Mammary epithelial cell (primary cell): ENCODE measurements at regions of chr13 and their contacts with region 1.

Region 1: GRCh38 chr13:20182231-20182846 is 10.4 kb downstream of the GJB2 start:
- DNase-seq: peak; percentile 54
- H3K4me3 ChIP-seq: no peak overlapping the region
- H3K27ac ChIP-seq: no peak overlapping the region
- H3K4me1 ChIP-seq: peaks cover 9% of the 10 kb centered on the region
- H3K27me3 ChIP-seq: no peaks in the 10 kb centered on the region
- CTCF ChIP-seq: peak; percentile 90

Region 2: GRCh38 chr13:19618925-19619324 is 563.4 kb before region 1 on chr13:
- CTCF ChIA-PET with region 1: no interaction called
- dilution Hi-C with region 1: no loop called
- in situ Hi-C with region 1: no loop called
- intact Hi-C with region 1: no loop called
- DNase-seq: no peak
- H3K4me3 ChIP-seq: no peak overlapping the region
- H3K27ac ChIP-seq: no peak overlapping the region
- H3K4me1 ChIP-seq: no peaks in the 10 kb centered on the region
- H3K27me3 ChIP-seq: no peaks in the 10 kb centered on the region
- CTCF ChIP-seq: peak; percentile 74 to 81

Region 3: GRCh38 chr13:20136781-20137703 is 45.3 kb before region 1 on chr13:
- CTCF ChIA-PET with region 1: no interaction called
- dilution Hi-C with region 1: no loop called
- in situ Hi-C with region 1: no loop called
- intact Hi-C with region 1: no loop called
- DNase-seq: peak; percentile 14
- H3K4me3 ChIP-seq: peak overlapping the region in 1 of 3 experiments; percentile 9
- H3K27ac ChIP-seq: no peak overlapping the region
- H3K4me1 ChIP-seq: no peaks in the 10 kb centered on the region
- H3K27me3 ChIP-seq: no peaks in the 10 kb centered on the region
- CTCF ChIP-seq: peak; percentile 16 to 52

Region 4: DNA sequence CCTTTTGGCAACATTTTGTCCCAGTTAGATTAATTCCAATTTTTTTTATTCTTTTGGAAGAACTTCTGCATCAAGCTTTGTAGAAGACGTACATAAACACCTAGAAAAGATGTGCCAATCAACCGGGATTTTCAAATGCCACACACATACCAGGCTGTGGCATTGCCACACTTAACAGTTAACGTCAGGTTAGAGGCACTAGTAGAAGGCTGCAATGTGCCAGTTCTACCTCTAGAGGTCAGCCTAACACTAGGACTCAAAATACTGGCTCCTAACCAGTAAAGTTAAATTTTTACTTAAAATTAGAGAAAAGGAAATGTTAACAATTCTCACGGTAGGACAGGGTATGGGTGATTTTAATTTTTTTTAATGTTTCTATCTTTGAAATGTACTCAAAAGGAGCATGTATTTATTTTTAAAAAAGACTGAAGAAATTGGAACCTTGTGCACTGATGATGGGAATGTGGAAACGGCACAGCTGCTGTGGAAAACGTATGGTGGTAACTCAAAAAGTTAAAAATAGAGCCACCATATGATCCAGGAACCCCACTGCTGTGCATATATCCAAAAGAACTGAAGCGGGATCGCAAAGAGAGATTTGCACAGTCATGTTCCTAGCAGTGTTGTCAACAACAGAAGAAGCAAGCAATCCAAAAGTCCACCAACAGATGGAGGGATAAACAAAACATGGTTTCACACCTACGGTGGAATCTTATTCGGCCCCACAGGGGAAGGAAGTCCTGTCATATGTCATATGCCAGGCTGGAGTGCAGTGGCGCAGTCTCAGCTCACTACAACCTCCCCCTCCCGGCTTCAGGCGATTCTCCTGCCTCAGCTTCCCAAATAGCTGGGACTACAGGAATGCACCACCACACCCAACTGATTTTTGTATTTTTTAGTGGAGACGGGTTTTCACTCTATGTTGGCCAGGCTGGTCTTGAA is 313.0 kb after region 1 on chr13:
- CTCF ChIA-PET with region 1: no interaction called
- dilution Hi-C with region 1: no loop called
- in situ Hi-C with region 1: no loop called
- intact Hi-C with region 1: loop called (anchors 1 kb)
- DNase-seq: peak; percentile 56
- H3K4me3 ChIP-seq: no peak overlapping the region
- H3K27ac ChIP-seq: no peak overlapping the region
- H3K4me1 ChIP-seq: peaks cover 10% of the 10 kb centered on the region
- H3K27me3 ChIP-seq: no peaks in the 10 kb centered on the region
- CTCF ChIP-seq: peak; percentile 91 to 98

Region 5: DNA sequence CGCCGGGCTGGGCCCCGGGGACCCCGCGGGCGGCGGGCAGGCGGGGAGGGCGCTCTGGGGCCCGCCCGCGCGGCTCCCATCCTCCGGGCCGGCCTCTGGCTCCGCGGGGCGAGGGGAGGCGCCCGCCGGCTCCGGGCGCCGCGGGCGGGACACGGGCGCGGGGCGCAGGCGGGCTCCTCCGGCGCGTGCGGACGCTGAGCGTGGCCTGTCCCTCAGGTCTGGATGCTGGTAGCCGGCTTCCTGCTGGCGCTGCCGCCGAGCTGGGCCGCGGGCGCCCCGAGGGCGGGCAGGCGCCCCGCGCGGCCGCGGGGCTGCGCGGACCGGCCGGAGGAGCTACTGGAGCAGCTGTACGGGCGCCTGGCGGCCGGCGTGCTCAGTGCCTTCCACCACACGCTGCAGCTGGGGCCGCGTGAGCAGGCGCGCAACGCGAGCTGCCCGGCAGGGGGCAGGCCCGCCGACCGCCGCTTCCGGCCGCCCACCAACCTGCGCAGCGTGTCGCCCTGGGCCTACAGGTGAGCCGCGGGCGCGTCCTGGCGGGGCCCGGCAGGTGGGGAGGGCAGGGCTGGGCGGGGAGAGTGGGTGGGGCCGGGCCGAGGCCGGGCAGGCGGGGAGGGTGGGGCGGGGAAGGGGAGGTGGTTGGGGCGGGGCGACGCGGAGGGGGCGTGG is 521.6 kb after region 1 on chr13:
- CTCF ChIA-PET with region 1: interaction called, 5 read pairs
- dilution Hi-C with region 1: loop called (anchors 5 kb)
- in situ Hi-C with region 1: no loop called
- intact Hi-C with region 1: loop called (anchors 2 kb)
- DNase-seq: peak; percentile 82
- H3K4me3 ChIP-seq: peak overlapping the region in 2 of 3 experiments; percentile 60 to 74
- H3K27ac ChIP-seq: no peak overlapping the region
- H3K4me1 ChIP-seq: peaks cover 6% of the 10 kb centered on the region
- H3K27me3 ChIP-seq: no peaks in the 10 kb centered on the region
- CTCF ChIP-seq: peak; percentile 36 to 44

Region 6: GRCh38 chr13:20714563-20715329 is 532.4 kb after region 1 on chr13:
- CTCF ChIA-PET with region 1: no interaction called
- dilution Hi-C with region 1: no loop called
- in situ Hi-C with region 1: no loop called
- intact Hi-C with region 1: no loop called
- DNase-seq: no peak
- H3K4me3 ChIP-seq: no peak overlapping the region
- H3K27ac ChIP-seq: no peak overlapping the region
- H3K4me1 ChIP-seq: no peaks in the 10 kb centered on the region
- H3K27me3 ChIP-seq: no peaks in the 10 kb centered on the region
- CTCF ChIP-seq: no peak

Region 7: DNA sequence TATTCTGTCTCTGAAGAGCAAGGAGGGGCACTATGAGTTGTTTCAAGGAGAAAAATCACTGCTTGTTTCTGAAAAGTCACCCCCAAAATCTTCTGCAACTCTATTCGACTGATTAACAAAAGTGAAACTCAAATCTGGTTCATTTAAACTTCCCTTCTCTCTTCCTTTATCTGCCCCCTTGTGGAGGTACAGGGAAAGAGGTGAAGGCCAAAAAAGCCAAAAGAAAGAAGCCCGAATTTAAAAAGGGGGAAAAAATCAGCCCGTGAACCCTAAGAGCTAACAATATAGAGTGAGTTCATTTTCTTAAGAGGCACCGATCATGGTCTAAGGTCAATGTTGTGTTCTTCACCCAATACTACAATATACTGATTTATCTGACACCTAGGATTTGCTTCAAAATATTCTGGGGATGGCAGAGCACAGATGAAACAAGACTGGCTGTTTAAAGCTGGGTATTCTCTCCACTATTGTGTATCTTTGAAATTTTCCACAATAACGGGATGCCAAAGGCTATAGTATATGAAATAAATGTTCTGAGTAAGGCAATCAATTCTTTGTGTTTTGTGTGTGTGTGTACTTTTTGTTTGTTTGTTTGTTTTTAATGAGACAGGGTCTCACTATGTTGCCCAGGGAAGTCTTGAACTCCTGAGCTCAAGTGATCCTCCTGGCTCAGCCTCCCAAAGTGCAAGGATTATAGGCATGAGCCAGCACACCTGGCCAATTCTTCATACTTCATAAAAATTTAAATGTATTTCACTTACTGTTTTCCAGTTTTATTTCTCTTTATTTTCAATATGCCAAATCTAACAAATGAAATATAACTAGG is 646.4 kb after region 1 on chr13:
- CTCF ChIA-PET with region 1: no interaction called
- dilution Hi-C with region 1: no loop called
- in situ Hi-C with region 1: loop called (anchors 25 kb)
- intact Hi-C with region 1: loop called (anchors 1 kb)
- DNase-seq: peak; percentile 45
- H3K4me3 ChIP-seq: peak overlapping the region; percentile 26 to 42 (median 33)
- H3K27ac ChIP-seq: peak overlapping the region; percentile 4
- H3K4me1 ChIP-seq: no peaks in the 10 kb centered on the region
- H3K27me3 ChIP-seq: no peaks in the 10 kb centered on the region
- CTCF ChIP-seq: peak; percentile 67 to 83

Region 8: GRCh38 chr13:20902438-20903163 is 720.3 kb after region 1 on chr13 and contains the start of gene XPO4:
- CTCF ChIA-PET with region 1: no interaction called
- dilution Hi-C with region 1: no loop called
- in situ Hi-C with region 1: loop called (anchors 25 kb)
- intact Hi-C with region 1: no loop called
- DNase-seq: peak; percentile 76
- H3K4me3 ChIP-seq: peak within 1 kb of the TSS; percentile 90 to 97 (median 97)
- H3K27ac ChIP-seq: peak within 1 kb of the TSS; percentile 87
- H3K4me1 ChIP-seq: peaks cover 6% of the 10 kb centered on the region
- H3K27me3 ChIP-seq: no peaks in the 10 kb centered on the region
- CTCF ChIP-seq: no peak
- total RNA-seq, gene XPO4: 18.1 to 23.7 TPM